Dendritic cell treated with granulocyte-macrophage colony-stimulating factor and Interleukin-4, amounts not matched to agents 40 ng/mL and 50 ng/mL, for 4 days (primary cell): ENCODE measurements at regions of chr6 and their contacts with region 1.

Region 1: DNA sequence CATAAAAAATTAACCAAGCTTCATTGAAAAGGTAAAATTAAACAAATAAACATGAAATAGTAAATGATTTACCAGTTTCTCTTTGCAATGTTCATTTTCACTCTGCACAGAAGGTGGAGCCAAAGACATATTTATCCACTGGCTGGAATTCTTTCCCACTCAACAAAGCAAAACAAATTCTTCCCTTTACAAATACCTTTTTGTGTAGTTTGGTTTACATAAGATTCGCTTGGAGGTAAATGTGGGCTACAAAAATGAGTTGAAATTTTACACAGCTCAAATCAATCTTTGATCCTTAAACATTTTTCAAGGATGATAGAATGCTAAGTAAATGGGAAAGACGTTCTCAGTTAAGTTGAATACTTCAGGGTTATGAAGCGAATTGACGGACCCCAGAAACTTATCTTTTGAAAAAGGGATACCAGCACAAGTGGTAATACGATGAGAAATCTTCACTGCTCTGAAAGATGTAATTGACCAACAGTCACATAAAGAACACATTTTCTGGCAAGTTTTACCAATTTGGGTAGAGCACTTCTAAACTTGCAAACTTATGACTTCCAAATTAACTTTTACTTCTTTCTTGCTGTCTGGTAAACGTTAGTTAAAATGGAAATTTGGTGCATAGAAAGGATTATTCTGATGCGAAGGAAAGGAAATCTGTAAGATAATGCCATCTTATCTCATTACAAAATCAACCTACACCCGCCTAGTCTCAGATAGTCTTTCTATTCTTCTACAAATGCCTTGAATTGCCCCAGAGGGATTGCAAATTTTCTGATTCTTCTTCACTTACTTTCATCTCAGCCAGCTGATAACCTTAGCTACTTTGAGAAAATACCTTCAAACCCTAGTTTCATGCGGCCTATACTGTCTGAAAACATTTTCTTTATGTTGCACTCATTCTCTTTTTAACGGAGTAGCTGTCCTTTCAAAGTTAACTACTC is 4.7 kb upstream of the GJA1 start:
- H3K4me3 Mint-ChIP-seq: no peak overlapping the region
- H3K27ac Mint-ChIP-seq: no peak overlapping the region
- H3K4me1 Mint-ChIP-seq: no peaks in the 10 kb centered on the region
- H3K27me3 Mint-ChIP-seq: peaks cover 10% of the 10 kb centered on the region

Region 2: DNA sequence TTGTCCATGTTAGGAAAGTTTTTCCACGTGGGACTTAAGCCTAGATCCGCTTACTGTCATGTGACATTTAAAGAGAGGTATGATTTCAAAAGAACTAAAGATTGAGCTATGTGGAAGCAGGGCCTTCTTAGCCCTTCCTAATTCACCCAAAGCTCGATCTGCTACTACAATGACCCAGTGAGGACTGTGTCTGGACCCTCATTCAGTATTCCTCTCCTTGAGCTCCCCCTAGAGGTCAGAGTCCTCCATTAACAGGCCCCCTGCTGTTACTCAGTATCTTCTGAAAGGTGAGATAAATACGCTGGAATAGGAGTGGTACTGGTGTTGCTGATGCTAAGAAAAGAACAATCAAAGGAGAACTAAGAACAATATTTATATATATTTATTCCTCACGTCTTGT is 418.7 kb after region 1 on chr6:
- intact Hi-C with region 1: loop called (anchors 5 kb)
- H3K4me3 Mint-ChIP-seq: no peak overlapping the region
- H3K27ac Mint-ChIP-seq: no peak overlapping the region
- H3K4me1 Mint-ChIP-seq: no peaks in the 10 kb centered on the region
- H3K27me3 Mint-ChIP-seq: no peaks in the 10 kb centered on the region

Region 3: DNA sequence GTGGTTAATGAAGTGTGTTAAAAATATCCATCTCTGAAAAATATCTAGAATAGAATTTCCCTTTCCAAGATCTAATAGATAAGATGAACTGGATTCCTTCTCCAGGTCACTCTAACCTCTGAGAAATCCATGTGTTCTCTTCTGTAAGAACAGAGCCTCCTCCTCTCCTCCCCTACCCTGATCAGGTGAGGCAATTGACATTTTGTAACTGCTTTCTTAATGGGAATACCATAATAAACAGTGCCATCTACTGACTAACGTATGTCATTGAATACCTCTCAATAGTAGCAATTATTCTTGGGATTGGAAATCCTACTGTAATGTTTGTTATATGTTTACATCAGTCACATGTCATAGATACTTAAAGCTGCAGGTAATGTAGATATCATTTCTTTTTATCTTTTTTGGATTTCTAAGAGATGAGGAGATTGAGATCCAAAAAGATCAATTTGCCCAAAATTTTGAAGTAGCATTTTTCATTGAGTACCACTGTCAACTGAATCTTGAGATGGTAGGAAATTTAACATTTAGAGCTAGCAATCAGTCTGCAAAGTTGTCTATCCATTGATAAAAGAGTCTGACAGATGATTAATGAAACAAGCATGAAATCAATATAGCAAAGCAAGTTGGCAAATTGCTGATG is 602.9 kb after region 1 on chr6:
- intact Hi-C with region 1: loop called (anchors 2 kb)
- H3K4me3 Mint-ChIP-seq: no peak overlapping the region
- H3K27ac Mint-ChIP-seq: no peak overlapping the region
- H3K4me1 Mint-ChIP-seq: no peaks in the 10 kb centered on the region
- H3K27me3 Mint-ChIP-seq: no peaks in the 10 kb centered on the region